Left ventricle myocardium inferior (tissue), 1 donor: ENCODE measurements at regions of chr1 and their contacts with region 1.

Region 1: GRCh38 chr1:201559679-201560162 is 20.8 kb downstream of the NAV1 start:
- DNase-seq: peak; percentile 83
- H3K4me3 ChIP-seq: no peak overlapping the region
- H3K27ac ChIP-seq: peak overlapping the region; percentile 42
- H3K4me1 ChIP-seq: peaks cover 94% of the 10 kb centered on the region
- H3K27me3 ChIP-seq: no peaks in the 10 kb centered on the region
- CTCF ChIP-seq: peak; percentile 96

Region 2: GRCh38 chr1:201385299-201385891 is 174.3 kb before region 1 on chr1:
- intact Hi-C with region 1: no loop called
- DNase-seq: no peak
- H3K4me3 ChIP-seq: no peak overlapping the region
- H3K27ac ChIP-seq: no peak overlapping the region
- H3K4me1 ChIP-seq: peaks cover 36% of the 10 kb centered on the region
- H3K27me3 ChIP-seq: peaks cover 29% of the 10 kb centered on the region
- CTCF ChIP-seq: peak; percentile 84

Region 3: GRCh38 chr1:201637680-201638079 is 78.0 kb after region 1 on chr1:
- intact Hi-C with region 1: loop called (anchors 10 kb)
- DNase-seq: peak; percentile 24
- H3K4me3 ChIP-seq: no peak overlapping the region
- H3K27ac ChIP-seq: peak overlapping the region; percentile 77
- H3K4me1 ChIP-seq: peaks cover 85% of the 10 kb centered on the region
- H3K27me3 ChIP-seq: no peaks in the 10 kb centered on the region
- CTCF ChIP-seq: no peak

Region 4: DNA sequence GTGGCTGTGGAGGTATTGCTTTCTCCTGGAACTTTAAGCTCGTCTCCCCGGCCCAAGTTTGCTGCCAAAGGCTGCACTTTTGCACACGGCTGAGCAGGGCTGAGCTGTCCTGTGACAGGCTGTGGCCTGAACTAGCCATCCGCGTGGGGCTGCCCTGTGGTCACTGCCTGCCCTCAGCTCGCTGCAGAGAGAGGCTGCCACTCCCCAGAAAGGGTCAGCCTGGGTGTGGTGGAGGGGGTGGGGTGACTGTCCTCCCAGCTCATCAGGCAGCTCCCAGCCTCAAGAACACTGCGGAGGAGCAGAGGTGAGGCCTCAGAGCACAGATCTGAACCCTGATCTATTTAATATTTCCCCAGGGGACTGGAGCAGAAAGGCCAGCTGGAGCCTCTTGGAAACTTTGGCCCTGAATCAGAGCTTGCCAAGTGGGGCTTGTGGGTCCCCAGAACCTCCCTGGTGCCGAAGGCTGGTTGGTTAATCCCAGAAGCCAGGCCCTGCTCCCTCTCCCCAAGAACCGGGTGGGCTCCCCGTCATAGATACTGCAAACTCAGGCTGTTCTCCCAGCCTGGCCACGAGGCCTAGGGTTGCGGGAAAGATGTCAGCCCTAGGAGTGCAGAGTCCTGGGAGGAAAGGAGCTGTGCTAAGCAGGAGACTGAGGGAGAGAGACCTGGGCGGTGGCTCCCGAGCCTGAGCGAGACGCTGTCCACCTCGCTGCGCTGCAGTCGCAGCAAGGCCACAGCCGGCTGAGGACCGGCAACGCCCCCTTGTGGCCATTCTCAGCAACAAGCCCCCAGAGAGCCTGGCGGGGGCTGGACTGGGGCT is 144.1 kb after region 1 on chr1:
- intact Hi-C with region 1: loop called (anchors 2 kb)
- DNase-seq: peak; percentile 86
- H3K4me3 ChIP-seq: peak overlapping the region; percentile 27
- H3K27ac ChIP-seq: peak overlapping the region; percentile 85
- H3K4me1 ChIP-seq: peaks cover 53% of the 10 kb centered on the region
- H3K27me3 ChIP-seq: no peaks in the 10 kb centered on the region
- CTCF ChIP-seq: peak; percentile 98

Region 5: DNA sequence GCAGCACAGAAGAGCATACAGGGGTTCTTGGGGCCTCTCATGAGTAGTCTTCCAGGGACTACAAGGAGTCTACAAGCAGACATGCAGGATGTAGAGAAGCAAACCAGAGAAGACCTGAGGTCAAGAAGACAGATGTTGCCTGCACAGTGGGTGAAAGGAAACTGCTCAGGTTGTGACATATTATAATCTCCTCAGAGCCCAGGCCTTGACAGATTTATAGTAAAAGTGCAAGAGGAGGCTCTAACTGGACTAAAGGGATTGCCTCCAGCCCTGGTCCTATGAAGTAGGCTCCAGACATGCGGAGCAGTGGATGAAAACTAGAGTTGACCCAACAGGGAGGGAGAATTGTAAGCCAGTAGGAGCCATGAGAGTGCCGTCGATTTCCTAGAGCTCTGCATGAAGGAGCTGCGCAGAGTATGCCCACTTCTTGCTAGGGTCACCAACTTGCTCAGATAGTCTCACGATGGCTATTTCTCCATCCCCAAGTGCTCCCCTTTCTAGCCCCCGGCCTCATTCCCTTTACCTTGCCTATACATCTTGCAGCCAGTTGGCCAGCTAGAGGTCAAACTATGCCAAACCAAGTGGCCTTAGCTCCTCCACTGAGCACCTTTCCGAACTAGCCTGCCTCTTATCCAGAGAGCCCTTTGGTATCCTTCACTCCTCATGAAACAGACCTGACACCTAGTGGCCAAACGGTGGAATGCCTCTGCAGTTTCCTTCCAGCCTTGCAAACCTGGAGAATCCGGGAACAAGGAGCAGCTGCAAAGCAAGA is 233.0 kb after region 1 on chr1:
- intact Hi-C with region 1: loop called (anchors 2 kb)
- DNase-seq: peak; percentile 71
- H3K4me3 ChIP-seq: no peak overlapping the region
- H3K27ac ChIP-seq: peak overlapping the region; percentile 78
- H3K4me1 ChIP-seq: peaks cover 75% of the 10 kb centered on the region
- H3K27me3 ChIP-seq: no peaks in the 10 kb centered on the region
- CTCF ChIP-seq: peak; percentile 99